Vagina (tissue), 2 donors: ENCODE measurements at regions of chr11 and their contacts with region 1.

Region 1: DNA sequence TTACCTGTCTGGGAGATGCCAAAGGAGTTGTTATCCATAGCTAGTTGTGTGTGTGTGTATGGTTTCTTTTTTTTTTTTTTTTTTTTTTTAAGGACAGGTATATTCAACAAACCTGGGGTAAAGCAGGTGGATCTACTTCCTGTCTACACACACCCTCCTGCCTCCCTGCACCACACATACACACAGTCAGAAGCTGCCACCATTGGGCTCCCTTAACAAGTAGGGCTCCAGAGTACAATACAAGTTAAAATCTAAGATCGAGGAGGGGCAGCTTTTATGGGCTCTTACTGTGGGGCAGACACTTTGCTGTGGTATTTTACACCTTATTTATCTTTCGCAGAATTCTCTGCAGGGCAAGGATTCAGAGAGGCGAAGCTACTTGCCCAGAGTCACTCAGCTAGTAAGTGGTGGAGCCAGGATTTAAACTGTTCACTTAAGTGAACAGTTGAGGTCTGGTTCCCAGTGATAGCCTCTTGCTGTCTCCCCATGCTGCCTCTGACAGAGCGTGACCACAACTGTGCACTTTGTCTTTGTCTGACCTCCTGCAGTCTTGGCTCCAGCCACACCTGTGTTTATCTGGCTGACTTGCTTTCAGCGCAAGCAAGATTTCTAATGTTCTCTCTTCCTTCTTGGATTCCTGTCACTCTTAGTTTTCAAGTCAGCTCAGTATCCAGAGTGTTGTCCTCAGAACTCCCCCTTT is 135.0 kb downstream of the CSNK2A3 start:
- DNase-seq: peak in 1 of 2 donors; percentile 47
- H3K4me3 ChIP-seq: no peak overlapping the region
- H3K27ac ChIP-seq: no peak overlapping the region
- H3K4me1 ChIP-seq: peaks cover 22% of the 10 kb centered on the region
- H3K27me3 ChIP-seq: no peaks in the 10 kb centered on the region
- CTCF ChIP-seq: no peak
- POLR2A ChIP-seq: no peak

Region 2: DNA sequence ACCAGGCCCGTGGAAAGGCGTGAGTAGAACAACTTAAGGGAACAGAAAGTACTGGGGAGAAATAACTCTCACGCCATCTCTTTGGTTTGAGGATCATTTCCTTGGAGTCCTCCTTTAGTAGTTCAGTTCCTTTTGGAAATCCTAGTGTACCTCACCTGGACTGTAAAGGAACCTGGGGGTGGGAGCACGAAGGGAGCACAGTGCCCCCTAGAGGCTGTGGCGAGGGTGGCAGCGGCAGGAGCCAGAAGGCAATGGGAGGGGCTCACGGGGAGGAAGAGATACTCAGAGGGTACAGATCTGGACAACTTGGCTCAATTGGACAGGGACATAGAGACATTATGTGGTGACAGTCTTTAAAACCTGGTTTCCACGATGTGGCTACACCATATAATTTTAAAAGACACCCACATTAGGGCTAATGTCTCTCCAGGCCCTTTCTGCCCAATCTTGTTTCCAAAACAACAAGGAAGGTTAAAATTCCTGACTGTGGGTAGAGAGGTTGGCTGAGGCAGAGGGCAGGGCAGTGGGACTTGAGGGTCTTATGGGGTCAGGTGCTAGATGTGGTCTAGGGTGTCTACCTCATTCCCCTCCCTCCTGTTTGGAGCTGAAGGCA is 48.0 kb after region 1 on chr11:
- intact Hi-C with region 1: loop called (anchors 2 kb)
- DNase-seq: no peak
- H3K4me3 ChIP-seq: no peak overlapping the region
- H3K27ac ChIP-seq: no peak overlapping the region
- H3K4me1 ChIP-seq: no peaks in the 10 kb centered on the region
- H3K27me3 ChIP-seq: no peaks in the 10 kb centered on the region
- CTCF ChIP-seq: peak; percentile 21 to 42 (median 32)
- POLR2A ChIP-seq: no peak